ENCODE measurements at regions of chr20 and their contacts with region 1.

Region 1: DNA sequence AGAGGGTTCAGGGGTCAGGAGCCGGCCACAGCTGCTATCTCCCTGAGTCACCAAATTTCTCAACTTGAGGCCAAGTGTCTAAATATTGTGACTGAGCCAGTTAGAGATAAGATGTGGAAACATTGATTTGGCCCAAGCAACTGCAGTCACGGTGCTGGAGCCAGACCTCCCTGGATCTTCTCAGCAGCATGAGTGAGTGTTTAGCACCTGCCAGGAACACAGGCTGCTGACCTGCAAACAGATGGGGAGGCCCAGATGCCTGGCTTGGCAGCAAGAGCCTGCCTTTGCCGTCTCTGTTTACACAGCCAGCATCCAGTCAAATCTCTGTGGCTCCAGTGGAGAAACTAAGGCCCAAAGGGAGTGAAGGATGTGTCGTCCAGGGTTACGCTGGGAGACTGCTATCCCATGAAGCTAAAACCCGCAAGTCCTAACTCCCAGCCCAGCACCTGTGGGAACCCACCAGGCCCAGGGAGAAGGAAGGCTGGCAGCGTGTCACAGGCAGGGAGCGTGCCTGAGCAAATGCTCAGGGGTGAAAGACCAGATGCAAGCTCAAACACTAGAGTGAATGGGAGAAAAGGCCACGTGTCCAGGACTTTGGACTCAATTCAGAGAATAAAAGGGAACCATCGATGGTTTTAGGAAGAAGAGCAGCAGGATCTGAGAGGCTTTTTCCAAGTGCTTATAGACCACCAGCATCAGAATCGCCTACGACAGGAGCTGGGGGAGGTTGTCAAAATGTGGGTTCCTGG is 15.9 kb upstream of the PTGIS start:
- DNase-seq: peak; percentile 88 to 99
- H3K4me3 ChIP-seq: peak overlapping the region; percentile 15; the same call in 1 of the 2 replicates
- H3K27ac ChIP-seq: peak overlapping the region; percentile 94
- H3K4me1 ChIP-seq: peaks cover 98% of the 10 kb centered on the region
- H3K27me3 ChIP-seq: no peaks in the 10 kb centered on the region
- CTCF ChIP-seq: no peak; the same call in 1 of the 2 replicates

Region 2: DNA sequence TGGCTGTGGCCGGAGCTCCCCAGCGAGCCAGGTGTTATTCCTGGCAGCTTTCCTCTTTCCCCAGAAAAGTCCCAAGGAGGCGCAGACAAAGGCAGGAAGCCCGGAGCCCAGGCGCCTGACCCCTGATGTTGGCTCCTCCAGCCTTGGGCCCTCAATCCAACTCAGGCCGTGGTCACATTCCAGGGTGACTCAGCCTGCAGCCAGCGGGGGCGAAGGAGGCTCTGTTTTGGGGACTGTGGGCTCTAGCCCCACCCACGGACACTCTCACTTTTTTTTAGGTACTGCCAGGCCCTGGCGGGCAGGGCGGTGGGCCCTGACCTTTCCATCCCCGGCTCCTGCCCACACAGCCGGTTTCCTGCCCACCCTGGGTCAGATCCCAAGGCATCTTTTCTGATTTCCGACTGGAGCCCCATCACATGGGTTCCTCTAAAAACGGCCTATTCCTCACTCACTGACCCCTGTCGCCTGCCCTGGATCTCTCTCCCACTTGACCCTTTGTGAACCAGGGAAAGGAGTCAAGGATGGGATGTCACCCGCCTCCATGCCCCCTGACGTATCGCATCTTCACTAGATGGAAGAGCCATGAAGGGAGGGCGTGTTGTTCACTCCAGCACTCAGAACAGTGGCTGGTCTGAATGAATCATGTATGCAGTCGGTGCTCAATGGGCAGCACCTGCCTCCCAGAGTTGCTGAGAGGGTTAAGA is 21.4 kb before region 1 on chr20:
- CTCF ChIA-PET with region 1: no interaction called
- POLR2A ChIA-PET with region 1: interaction called, 3 read pairs
- intact Hi-C with region 1: loop called (anchors 1 kb)
- DNase-seq: peak; percentile 86 to 92
- H3K4me3 ChIP-seq: peak overlapping the region; percentile 22; the same call in 1 of the 2 replicates
- H3K27ac ChIP-seq: peak overlapping the region; percentile 71
- H3K4me1 ChIP-seq: peaks cover 77% of the 10 kb centered on the region
- H3K27me3 ChIP-seq: no peaks in the 10 kb centered on the region
- CTCF ChIP-seq: no peak

Region 3: GRCh38 chr20:49821870-49822331 is 238.1 kb after region 1 on chr20:
- CTCF ChIA-PET with region 1: no interaction called
- POLR2A ChIA-PET with region 1: interaction called, 16 read pairs
- intact Hi-C with region 1: no loop called
- DNase-seq: peak; percentile 41 to 46
- H3K4me3 ChIP-seq: no peak overlapping the region
- H3K27ac ChIP-seq: 0 out of 2 replicates have a peak overlapping the region, but pooled peaks have one; percentile 13
- H3K4me1 ChIP-seq: peaks cover 47% of the 10 kb centered on the region
- H3K27me3 ChIP-seq: no peaks in the 10 kb centered on the region
- CTCF ChIP-seq: 0 out of 2 replicates have a peak, but pooled peaks have one; percentile 15